Heart right ventricle (tissue), 16 donors: ENCODE measurements at regions of chr21 and their contacts with region 1.

Region 1: GRCh38 chr21:25956993-25957714 is 213.4 kb downstream of the APP start:
- DNase-seq: no peak
- ATAC-seq: peak in 1 of 8 donors; percentile 65
- H3K4me3 ChIP-seq: no peak overlapping the region
- H3K27ac ChIP-seq: no peak overlapping the region
- H3K4me1 ChIP-seq: peaks cover 0 to 18% (median 10%) of the 10 kb centered on the region in 9 donors
- H3K27me3 ChIP-seq: no peaks in the 10 kb centered on the region
- CTCF ChIP-seq: no peak

Region 2: DNA sequence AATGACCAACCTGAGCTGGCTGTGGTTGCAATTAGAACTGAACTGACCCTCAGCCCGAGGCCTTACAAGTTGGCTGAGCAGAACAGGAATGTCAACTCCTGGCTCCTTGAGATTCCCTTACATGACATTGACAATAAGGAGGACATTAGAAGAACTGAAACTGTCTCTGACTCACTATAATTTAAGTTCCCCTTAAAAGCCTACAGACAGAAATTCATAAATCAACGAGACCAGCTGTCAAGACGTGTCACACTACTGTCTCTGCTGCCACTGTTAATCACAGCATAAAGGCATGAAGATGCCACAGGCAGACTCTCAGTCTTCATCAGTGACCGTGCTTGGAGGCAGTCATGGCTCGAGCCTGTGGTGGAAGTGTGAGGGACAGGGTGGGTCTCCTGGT is 53.6 kb before region 1 on chr21:
- intact Hi-C with region 1: loop called in 1 of 10 experiments (anchors 10 kb)
- DNase-seq: no peak
- ATAC-seq: peak in 4 of 8 donors; percentile 14 to 48 (median 32)
- H3K4me3 ChIP-seq: no peak overlapping the region
- H3K27ac ChIP-seq: peak overlapping the region in 2 of 10 donors; percentile 5 to 31
- H3K4me1 ChIP-seq: peaks cover 0 to 58% (median 31%) of the 10 kb centered on the region in 9 donors
- H3K27me3 ChIP-seq: no peaks in the 10 kb centered on the region
- CTCF ChIP-seq: no peak